Lower leg skin (tissue), 4 donors: ENCODE measurements at regions of chr4 and their contacts with region 1.

Region 1: DNA sequence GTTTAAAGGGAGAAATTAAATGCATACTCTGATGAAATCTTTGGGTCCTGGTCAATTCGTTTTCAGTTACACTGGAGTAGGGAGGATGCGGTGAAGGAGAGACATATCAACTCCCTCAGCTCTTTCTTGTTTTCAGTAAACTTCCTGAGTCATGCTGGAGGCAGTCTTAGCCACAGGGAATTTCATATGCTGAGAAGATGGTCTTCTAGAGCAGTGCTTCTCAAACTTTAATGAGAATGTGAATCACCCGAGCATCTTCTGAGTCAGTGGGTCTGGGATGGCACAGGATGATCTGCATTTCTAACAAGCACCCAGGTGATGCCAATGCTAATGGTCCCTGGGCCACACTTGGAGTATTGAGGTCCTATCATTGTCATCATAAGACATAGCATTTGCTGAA is 214.5 kb downstream of the KIT start:
- DNase-seq: no peak
- H3K4me3 ChIP-seq: no peak overlapping the region
- CTCF ChIP-seq: no peak
- POLR2A ChIP-seq: no peak

Region 2: GRCh38 chr4:54930226-54930625 is 58.0 kb after region 1 on chr4:
- intact Hi-C with region 1: loop called (anchors 2 kb)
- DNase-seq: no peak
- H3K4me3 ChIP-seq: no peak overlapping the region
- CTCF ChIP-seq: no peak
- POLR2A ChIP-seq: no peak

Region 3: GRCh38 chr4:55078987-55079386 is 206.7 kb after region 1 on chr4:
- intact Hi-C with region 1: no loop called
- DNase-seq: peak; percentile 44 to 89
- H3K4me3 ChIP-seq: no peak overlapping the region
- CTCF ChIP-seq: no peak
- POLR2A ChIP-seq: no peak